PC-9 (cell line): ENCODE measurements at regions of chr3 and their contacts with region 1.

Region 1: GRCh38 chr3:127044996-127045715 is 62.2 kb downstream of the PLXNA1 start:
- DNase-seq: peak in 1 of 2 experiments; percentile 56
- H3K4me3 ChIP-seq: no peak overlapping the region
- H3K27ac ChIP-seq: no peak overlapping the region
- H3K4me1 ChIP-seq: peaks cover 26% of the 10 kb centered on the region
- H3K27me3 ChIP-seq: peaks cover 4% of the 10 kb centered on the region; the same call in 1 of the 2 replicates
- CTCF ChIP-seq: no peak

Region 2: DNA sequence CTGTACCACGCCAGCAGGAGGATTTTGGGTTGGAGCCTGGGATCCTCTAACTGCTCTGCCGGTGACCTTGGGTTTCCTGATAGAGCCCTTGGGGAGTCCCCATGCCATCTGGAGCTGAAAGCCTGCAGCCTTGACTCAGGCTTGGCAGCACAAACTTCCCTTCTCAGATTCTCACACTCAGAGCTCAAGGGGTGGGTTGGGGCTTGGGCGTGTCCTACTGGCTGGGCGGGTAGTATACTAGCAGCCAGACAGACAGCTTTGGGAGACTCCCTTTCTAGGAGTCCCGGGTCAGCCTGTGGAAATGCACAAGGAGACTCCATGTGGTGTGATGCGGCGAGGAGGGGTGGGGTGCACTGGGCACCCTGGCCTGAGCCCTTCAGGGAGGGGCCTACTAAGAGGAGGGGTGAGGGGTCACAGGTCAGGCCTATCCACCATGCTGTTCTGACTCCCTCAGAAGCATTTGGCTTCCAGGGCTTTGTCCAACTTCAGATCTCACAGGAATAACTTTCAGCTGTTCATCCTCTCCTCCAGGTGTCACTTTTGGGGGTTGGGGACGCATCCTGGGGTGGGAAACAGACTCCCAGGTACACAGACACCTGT is 83.9 kb before region 1 on chr3:
- CTCF ChIA-PET with region 1: no interaction called
- POLR2A ChIA-PET with region 1: no interaction called
- intact Hi-C with region 1: no loop called
- DNase-seq: peak; percentile 41 to 68
- H3K4me3 ChIP-seq: no peak overlapping the region
- H3K27ac ChIP-seq: peak overlapping the region; percentile 35
- H3K4me1 ChIP-seq: peaks cover 49% of the 10 kb centered on the region
- H3K27me3 ChIP-seq: no peaks in the 10 kb centered on the region
- CTCF ChIP-seq: no peak

Region 3: GRCh38 chr3:127089486-127090145 is 44.5 kb after region 1 on chr3:
- CTCF ChIA-PET with region 1: no interaction called
- POLR2A ChIA-PET with region 1: no interaction called
- intact Hi-C with region 1: loop called (anchors 5 kb)
- DNase-seq: no peak
- H3K4me3 ChIP-seq: no peak overlapping the region
- H3K27ac ChIP-seq: no peak overlapping the region
- H3K4me1 ChIP-seq: peaks cover 4% of the 10 kb centered on the region; the same call in 1 of the 2 replicates
- H3K27me3 ChIP-seq: 0 out of 2 replicates have a peak, but pooled peaks cover 5% of the 10 kb centered on the region
- CTCF ChIP-seq: no peak

Region 4: DNA sequence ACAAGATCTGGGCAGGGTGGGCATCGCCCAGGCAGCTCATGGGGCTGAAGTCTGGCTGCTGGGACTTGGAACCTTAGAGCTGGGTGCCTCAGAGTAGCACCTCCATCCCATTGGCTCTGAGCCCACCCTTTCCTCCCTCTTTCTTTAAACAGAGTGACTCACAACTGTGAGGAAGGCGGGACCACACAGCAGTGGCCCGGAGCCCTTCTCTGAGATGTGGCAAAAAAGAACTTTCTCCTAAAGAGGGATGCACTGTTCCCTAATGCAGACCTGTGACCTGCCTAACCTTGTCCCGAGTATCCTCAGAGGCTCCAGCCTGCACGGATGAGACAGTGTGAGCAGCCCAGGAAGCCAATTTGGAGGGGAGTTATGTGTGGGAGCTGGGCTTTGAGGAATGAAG is 219.1 kb after region 1 on chr3:
- CTCF ChIA-PET with region 1: no interaction called
- POLR2A ChIA-PET with region 1: no interaction called
- intact Hi-C with region 1: no loop called
- DNase-seq: no peak
- H3K4me3 ChIP-seq: no peak overlapping the region
- H3K27ac ChIP-seq: no peak overlapping the region
- H3K4me1 ChIP-seq: no peaks in the 10 kb centered on the region
- H3K27me3 ChIP-seq: peaks cover 8% of the 10 kb centered on the region
- CTCF ChIP-seq: no peak